Psoas muscle (tissue), 8 donors: ENCODE measurements at regions of chr4 and their contacts with region 1.

Region 1: GRCh38 chr4:184649026-184649970 is at the starts of genes CASP3 and PRIMPOL:
- DNase-seq: peak; percentile 98 to 99
- ATAC-seq: peak; percentile 92 to 95 (median 94)
- H3K4me3 ChIP-seq: peak within 1 kb of the TSS; percentile 91
- H3K27ac ChIP-seq: peak within 1 kb of the TSS; percentile 99
- H3K4me1 ChIP-seq: peaks cover 53% of the 10 kb centered on the region
- H3K27me3 ChIP-seq: no peaks in the 10 kb centered on the region
- CTCF ChIP-seq: peak; percentile 29
- total RNA-seq, gene CASP3: 13.8 to 49.7 (median 20.5) TPM
- total RNA-seq, gene PRIMPOL: 4.8 to 10.1 (median 7.5) TPM

Region 2: DNA sequence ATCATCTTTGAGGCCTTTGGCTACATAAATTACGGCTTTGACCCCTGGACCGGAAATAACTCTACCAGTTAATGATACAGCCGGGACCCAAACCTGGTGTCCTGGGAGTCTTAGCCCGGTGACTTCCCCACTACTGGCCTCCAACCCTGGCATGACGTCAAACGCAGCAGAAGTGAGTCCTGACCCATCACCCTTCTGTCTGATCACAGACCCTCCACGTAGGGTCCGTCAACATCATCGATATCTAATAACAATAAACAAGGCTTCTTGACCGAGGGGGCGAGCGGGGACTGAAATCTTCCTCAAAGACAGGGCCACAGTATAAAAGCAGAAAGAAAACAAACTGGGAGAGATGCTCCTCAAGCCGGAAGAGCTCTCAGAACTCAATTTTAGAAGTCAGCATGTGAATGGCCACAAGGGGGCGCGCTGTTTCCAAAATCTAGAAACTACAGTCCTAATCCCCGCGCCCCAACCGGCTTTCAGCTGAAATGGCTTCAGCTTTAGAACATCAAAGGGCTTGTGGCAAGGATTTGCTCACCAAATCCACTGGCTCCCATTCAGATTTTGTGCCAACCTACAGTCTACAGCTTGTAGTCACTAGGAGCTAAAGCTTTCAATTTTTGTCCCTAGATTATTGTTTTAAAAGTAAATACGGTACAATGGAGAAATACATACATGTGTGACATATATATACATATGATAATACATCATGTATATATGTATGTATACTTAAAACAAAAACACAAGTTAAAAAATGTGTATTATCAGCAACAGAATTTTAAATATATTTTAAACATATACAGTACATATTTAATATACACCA is 385.2 kb before region 1 on chr4:
- intact Hi-C with region 1: loop called in 1 of 2 experiments (anchors 10 kb)
- DNase-seq: peak; percentile 93 to 95
- ATAC-seq: peak; percentile 78 to 95 (median 86)
- H3K4me3 ChIP-seq: no peak overlapping the region
- H3K27ac ChIP-seq: no peak overlapping the region
- H3K4me1 ChIP-seq: no peaks in the 10 kb centered on the region
- H3K27me3 ChIP-seq: no peaks in the 10 kb centered on the region
- CTCF ChIP-seq: peak; percentile 95